ENCODE measurements at regions of chr4 and their contacts with region 1.

Region 1: DNA sequence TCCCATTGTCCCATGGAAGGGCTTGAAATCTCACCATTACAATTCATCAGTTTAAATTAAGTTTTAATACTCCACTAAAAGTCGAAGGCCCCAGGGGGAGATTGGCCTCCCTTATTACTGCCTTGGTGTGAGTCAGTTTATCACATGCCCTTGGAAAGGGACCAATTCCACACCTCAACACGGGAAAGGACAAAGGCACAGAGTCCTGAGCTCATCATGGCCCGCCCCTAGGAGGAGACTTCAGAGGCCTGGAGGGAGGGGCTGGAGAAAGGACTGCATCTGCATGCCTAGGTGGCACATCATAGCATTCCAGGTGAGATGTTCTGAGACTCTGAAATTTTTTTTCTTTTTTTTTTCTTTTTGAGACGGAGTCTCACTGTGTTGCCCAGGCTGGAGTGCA is 2.8 kb upstream of the SEL1L3 start:
- DNase-seq: peak; percentile 88 to 91
- H3K4me3 ChIP-seq: no peak overlapping the region
- H3K27ac ChIP-seq: 0 out of 2 replicates have a peak overlapping the region, but pooled peaks have one; percentile 6
- H3K4me1 ChIP-seq: peaks cover 11% of the 10 kb centered on the region
- H3K27me3 ChIP-seq: no peaks in the 10 kb centered on the region
- CTCF ChIP-seq: no peak

Region 2: GRCh38 chr4:25448379-25449109 is 417.0 kb before region 1 on chr4:
- CTCF ChIA-PET with region 1: no interaction called
- POLR2A ChIA-PET with region 1: interaction called, 14 read pairs
- intact Hi-C with region 1: no loop called
- DNase-seq: peak in 1 of 2 experiments; percentile 6
- H3K4me3 ChIP-seq: no peak overlapping the region
- H3K27ac ChIP-seq: no peak overlapping the region
- H3K4me1 ChIP-seq: no peaks in the 10 kb centered on the region
- H3K27me3 ChIP-seq: no peaks in the 10 kb centered on the region
- CTCF ChIP-seq: no peak

Region 3: DNA sequence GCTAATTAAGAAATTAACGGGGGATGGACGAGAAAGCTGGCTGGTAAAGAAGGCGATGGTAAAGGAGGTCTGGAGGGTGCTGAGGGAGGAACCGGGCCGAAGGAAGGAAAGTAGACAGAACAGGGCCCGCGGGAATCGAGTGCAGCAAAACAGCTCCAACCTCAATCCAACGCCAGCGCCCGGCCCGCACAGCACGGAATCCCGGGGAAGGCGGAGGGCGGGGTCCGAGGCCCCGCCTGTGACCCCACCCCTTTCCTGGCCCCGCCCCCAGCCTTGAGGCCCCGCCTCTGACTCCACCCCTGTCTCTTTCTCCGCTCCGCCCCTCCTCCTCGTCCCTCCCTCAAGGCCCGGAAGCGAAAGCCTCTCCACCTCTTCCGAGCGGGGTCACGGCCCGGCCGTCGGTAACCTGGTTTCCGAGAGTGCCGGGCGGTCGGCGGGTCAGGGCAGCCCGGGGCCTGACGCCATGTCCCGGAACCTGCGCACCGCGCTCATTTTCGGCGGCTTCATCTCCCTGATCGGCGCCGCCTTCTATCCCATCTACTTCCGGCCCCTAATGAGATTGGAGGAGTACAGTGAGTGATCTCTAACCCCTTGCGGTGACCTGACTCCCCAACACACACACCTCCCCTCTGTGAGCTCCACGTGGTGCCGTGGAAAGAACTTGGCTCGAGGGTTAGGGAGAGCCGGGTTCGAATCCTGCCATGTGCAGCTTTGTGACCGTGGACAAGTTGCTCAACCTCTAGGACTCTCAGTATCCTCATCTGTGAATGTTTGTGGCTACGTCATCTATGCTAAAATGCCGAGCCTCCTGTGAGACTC is 48.5 kb after region 1 on chr4 and contains the start of gene SMIM20:
- CTCF ChIA-PET with region 1: no interaction called
- POLR2A ChIA-PET with region 1: interaction called, 4 read pairs
- intact Hi-C with region 1: loop called (anchors 1 kb)
- DNase-seq: peak; percentile 70 to 90
- H3K4me3 ChIP-seq: peak within 1 kb of the TSS; percentile 62
- H3K27ac ChIP-seq: peak within 1 kb of the TSS; percentile 93
- H3K4me1 ChIP-seq: peaks cover 10% of the 10 kb centered on the region
- H3K27me3 ChIP-seq: no peaks in the 10 kb centered on the region
- CTCF ChIP-seq: no peak
- total RNA-seq, gene SMIM20: 40.5 and 44.2 TPM in 2 replicates

Region 4: DNA sequence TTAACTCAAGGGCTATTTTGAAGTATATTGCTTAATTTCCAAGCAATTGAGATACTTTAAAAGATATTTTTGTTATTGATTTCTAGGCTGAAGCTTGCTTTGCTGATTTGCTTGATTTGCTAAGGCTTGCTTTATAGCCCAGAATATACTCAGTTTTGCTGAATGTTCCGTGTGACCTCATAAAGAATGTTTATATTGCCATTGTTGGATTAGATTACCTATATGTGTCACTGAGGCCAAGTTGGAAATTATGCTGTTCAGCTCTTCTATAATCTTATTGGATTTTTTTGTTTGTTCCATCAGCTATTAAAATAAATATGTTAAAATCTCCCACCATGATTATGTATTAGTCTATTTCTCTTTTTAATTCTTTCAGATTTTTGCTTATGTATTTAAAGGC is 731.3 kb after region 1 on chr4:
- CTCF ChIA-PET with region 1: no interaction called
- POLR2A ChIA-PET with region 1: interaction called, 11 read pairs
- intact Hi-C with region 1: no loop called
- DNase-seq: no peak
- H3K4me3 ChIP-seq: no peak overlapping the region
- H3K27ac ChIP-seq: no peak overlapping the region
- H3K4me1 ChIP-seq: no peaks in the 10 kb centered on the region
- H3K27me3 ChIP-seq: no peaks in the 10 kb centered on the region
- CTCF ChIP-seq: no peak

Measured in PC-9 (cell line).